Ovary (tissue), 10 donors: ENCODE measurements at regions of chr5 and their contacts with region 1.

Region 1: DNA sequence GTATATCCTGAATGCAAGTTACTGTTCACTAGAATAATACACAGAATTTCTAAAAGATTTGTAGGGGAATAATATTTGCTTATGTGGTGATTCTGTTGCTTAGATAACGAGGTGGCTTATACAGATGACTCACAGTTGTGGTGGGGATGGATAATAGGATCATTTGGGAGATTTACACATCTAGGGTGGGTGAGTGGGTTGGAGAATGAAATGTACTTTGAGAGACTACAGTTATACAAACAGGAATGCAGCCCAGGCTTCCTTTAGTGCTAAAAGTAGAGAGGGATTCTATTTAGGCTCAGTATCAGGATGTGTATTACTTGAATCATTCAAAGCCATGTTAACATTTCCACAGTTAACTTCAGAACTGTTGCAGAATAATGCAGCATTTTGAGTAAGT is 1.8 kb downstream of the CTXN3 start:
- DNase-seq: no peak
- H3K4me3 ChIP-seq: no peak overlapping the region
- H3K27ac ChIP-seq: no peak overlapping the region
- H3K4me1 ChIP-seq: peaks cover 5% of the 10 kb centered on the region
- H3K27me3 ChIP-seq: no peaks in the 10 kb centered on the region
- CTCF ChIP-seq: no peak
- EP300 ChIP-seq: no peak
- POLR2A ChIP-seq: no peak

Region 2: DNA sequence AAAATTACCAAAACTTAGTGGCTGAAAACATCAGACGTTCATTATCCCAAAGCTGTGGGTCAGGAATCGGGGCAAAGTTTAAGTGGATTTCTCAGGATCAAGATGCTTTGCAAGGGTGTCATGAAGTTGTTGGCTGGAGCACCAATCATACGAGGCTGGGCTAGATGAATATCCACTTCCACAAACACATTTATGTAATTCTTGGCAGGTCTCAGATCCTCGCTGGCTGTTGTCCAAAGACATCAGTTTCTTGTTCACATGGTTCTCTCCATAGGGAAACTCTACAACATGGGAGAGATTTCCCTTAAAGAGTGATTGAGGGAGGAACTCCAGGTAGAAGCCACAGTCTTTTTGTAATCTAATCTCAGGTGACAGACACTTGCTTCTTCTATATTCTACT is 32.4 kb after region 1 on chr5:
- intact Hi-C with region 1: loop called in 1 of 4 experiments (anchors 1 kb)
- DNase-seq: no peak
- H3K4me3 ChIP-seq: no peak overlapping the region
- H3K27ac ChIP-seq: no peak overlapping the region
- H3K4me1 ChIP-seq: peaks cover 3% of the 10 kb centered on the region
- H3K27me3 ChIP-seq: no peaks in the 10 kb centered on the region
- CTCF ChIP-seq: no peak
- EP300 ChIP-seq: no peak
- POLR2A ChIP-seq: no peak

Region 3: GRCh38 chr5:127705120-127705892 is 54.7 kb after region 1 on chr5:
- intact Hi-C with region 1: loop called in 1 of 4 experiments (anchors 10 kb)
- DNase-seq: peak in 2 of 5 donors; percentile 17 to 64
- H3K4me3 ChIP-seq: no peak overlapping the region
- H3K27ac ChIP-seq: peak overlapping the region in 1 of 2 donors; percentile 22
- H3K4me1 ChIP-seq: peaks cover 7% of the 10 kb centered on the region
- H3K27me3 ChIP-seq: no peaks in the 10 kb centered on the region
- CTCF ChIP-seq: no peak
- EP300 ChIP-seq: no peak
- POLR2A ChIP-seq: no peak

Region 4: DNA sequence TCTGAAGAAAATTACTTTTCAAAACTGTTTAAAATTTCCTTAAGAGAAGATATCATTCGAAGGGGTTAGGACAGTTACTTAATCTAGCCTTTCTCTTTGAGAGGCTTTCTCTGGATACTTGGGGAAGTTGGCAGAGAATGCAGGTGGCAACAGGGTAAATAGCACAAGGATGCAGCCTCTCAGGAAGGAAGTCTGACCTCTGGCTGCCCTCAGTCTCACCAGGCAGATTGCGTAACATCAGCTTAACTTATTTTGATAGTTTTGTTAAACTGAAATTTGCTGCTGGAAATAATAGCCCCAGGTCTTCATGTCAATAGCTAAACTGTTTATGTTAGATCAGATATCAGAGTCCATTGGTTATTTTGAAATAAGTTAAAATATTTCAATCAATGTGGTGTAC is 72.9 kb after region 1 on chr5:
- intact Hi-C with region 1: no loop called
- DNase-seq: no peak
- H3K4me3 ChIP-seq: no peak overlapping the region
- H3K27ac ChIP-seq: no peak overlapping the region
- H3K4me1 ChIP-seq: no peaks in the 10 kb centered on the region
- H3K27me3 ChIP-seq: no peaks in the 10 kb centered on the region
- CTCF ChIP-seq: no peak
- EP300 ChIP-seq: no peak
- POLR2A ChIP-seq: no peak

Region 5: GRCh38 chr5:127988146-127988760 is 337.6 kb after region 1 on chr5:
- intact Hi-C with region 1: no loop called
- DNase-seq: no peak
- H3K4me3 ChIP-seq: no peak overlapping the region
- H3K27ac ChIP-seq: no peak overlapping the region
- H3K4me1 ChIP-seq: peaks cover 2% of the 10 kb centered on the region
- H3K27me3 ChIP-seq: no peaks in the 10 kb centered on the region
- CTCF ChIP-seq: no peak
- EP300 ChIP-seq: no peak
- POLR2A ChIP-seq: no peak